ENCODE measurements at regions of chr2 and their contacts with region 1.

Region 1: DNA sequence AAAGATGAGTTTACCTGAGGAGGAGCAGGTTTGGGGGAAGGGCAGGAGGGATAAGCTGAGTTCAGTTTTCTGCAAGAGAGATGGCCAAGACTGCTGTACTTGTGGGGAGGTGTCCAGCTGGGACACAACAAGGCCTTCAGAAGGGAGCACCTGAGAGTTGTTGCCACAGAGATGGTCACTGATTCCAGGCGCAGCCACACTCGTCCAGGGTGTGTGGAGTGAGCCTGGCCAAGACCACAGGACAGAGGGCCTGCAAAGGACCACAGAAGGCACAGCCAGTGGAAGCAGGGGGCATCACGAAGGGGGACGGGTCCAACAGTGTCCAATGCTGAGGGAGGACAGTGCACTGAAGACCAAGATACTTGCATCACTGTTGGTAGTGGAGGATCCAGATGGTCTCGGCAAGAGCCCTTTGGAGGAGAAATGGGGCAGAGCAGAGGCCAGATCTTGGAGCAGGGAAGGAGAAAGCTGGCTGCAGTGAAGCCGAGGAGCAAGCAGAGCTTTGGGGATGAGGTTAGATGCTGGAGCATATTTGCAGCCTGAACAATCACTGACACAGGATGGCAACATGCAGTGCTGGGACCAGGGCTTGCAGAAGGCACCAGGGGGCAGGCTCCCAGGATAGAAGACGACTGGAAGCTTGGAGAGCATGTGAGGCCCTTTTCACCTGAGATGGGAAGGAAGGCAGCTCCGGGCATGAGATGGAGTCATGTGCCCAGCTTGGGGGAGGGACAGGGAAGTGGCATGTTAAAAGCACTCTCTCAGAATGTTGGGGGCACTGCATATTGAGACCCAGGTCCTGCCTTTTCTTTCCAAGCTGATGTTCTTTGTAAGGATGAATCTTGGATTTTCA is 214.0 kb downstream of the CYP26B1 start:
- DNase-seq: no peak
- H3K4me3 ChIP-seq: no peak overlapping the region
- H3K27ac ChIP-seq: no peak overlapping the region
- H3K4me1 ChIP-seq: peaks cover 0 to 17% (median 7%) of the 10 kb centered on the region in 4 donors
- H3K27me3 ChIP-seq: no peaks in the 10 kb centered on the region
- CTCF ChIP-seq: no peak
- EP300 ChIP-seq: no peak
- POLR2A ChIP-seq: no peak

Region 2: DNA sequence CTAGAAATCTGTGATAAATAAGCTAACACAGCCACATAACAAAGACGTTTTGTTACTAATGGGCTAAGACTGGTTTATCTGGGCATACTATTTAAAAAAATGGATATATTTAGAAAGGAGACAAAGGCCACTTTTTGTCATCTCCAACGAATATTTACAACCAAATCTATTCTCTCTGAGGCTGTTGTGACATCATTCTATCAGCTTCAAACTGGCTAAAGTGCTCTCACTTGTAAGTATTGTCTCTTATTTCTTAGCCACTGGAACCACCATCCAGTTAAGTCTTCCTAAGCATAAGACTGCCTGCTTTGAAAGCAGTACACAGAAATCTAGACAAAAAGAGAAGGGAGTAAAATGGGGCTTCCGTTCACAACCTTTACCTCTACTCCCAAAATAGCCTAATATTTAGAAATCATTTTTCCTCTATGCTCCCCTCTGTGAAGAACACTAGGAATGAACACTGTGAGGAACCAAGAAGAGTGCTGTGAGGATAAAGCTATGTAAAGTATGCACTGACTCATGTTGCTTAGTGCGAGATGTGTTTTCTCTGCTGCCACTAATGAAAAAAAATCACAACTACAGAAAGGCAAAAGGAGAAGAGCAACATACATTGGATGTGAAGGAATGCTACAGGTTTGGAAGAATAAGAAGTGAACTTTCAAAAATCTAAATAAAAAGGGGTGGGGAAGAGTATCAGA is 628.1 kb after region 1 on chr2:
- in situ Hi-C with region 1: loop called in 1 of 4 experiments (anchors 25 kb)
- intact Hi-C with region 1: no loop called
- DNase-seq: no peak
- H3K4me3 ChIP-seq: no peak overlapping the region
- H3K27ac ChIP-seq: peak overlapping the region in 2 of 4 donors; percentile 1 to 25
- H3K4me1 ChIP-seq: peaks cover 0 to 10% (median 0%) of the 10 kb centered on the region in 4 donors
- H3K27me3 ChIP-seq: no peaks in the 10 kb centered on the region
- CTCF ChIP-seq: no peak
- EP300 ChIP-seq: no peak
- POLR2A ChIP-seq: no peak